Activated CD4-positive, alpha-beta memory T cell treated with anti-CD3 and anti-CD28 coated beads for 36 hours (primary cell): ENCODE measurements at regions of chr13 and their contacts with region 1.

Region 1: GRCh38 chr13:102845630-102846260 is at the start of gene ERCC5:
- DNase-seq: peak; percentile 97
- H3K4me3 Mint-ChIP-seq: peak within 1 kb of the TSS; percentile 92
- H3K27ac Mint-ChIP-seq: peak within 1 kb of the TSS; percentile 95
- H3K4me1 Mint-ChIP-seq: peaks cover 35% of the 10 kb centered on the region
- H3K27me3 Mint-ChIP-seq: peaks cover 1% of the 10 kb centered on the region
- total RNA-seq, gene ERCC5: 53.6 to 63.5 TPM

Region 2: DNA sequence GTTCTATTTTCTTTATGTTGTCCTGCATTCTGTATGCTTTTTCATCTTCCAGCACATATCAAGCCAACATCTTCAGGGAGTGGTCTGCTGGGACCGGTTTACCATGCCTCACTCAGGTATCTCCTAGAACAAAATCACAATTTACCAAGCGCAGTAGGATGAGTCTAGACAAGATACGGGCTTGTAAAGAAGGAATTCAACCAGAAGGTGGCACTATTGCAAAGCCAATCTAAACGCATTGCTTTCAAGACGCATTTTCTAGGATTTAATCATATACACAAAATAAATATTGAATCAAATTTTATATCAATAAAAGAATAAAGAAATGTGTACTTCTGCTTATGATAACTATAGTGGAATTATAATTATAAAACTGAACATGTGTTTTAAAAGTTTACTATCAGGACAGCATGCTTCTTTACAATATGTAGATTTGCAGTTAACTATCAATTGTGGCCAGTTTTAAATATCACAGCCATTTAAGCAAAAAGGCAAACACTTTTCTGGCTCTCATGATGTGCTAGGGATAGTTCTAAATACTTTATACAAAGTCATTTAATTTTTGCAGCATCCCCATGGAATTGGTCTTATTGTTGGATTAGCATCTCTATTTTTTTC is 265.1 kb before region 1 on chr13:
- CTCF ChIA-PET with region 1: interaction called, 10 read pairs
- POLR2A ChIA-PET with region 1: interaction called, 3 read pairs
- intact Hi-C with region 1: loop called (anchors 1 kb)
- DNase-seq: no peak
- H3K4me3 Mint-ChIP-seq: no peak overlapping the region
- H3K27ac Mint-ChIP-seq: no peak overlapping the region
- H3K4me1 Mint-ChIP-seq: peaks cover 4% of the 10 kb centered on the region
- H3K27me3 Mint-ChIP-seq: peaks cover 1% of the 10 kb centered on the region

Region 3: DNA sequence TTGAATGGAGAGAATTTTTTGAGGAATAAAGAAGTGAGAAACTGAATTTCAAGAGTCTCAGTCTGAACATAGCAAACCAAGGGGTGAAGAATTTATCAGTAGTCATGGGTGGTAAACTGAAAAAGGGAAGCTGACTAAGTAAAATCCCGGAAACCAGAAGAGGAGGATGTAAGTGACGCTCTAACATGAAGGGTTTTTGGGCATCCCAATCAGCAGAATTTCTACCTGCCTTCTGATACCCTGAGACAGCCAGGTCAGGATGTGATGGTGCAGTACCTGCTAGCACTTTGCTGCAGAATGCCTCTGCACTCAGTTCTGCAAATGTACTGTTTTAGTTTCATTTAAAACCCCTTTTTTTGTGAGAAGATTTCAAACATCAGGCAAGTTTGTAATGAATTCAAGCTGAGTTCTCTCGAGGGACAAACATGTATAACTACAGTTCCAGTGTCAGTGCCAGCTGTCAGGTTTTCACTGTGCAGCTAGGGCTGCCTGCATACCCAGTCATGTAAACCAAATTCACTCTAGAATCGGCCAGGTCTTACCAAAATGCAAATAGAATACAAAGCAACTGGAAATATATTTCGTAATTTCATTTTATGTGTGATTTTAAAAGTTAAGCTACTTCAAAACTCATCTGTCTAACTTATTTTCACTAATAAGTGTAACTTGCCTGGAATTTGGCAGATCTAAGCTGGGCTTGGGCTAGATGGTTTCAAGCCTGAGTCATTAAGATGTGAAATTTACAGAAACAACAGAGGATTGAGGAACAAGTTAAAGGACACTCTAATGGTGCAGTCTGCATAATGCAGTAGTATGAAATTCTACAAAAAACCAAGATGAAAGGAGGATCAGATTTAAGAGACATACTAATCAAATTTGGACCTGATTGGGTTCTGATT is 164.7 kb before region 1 on chr13:
- CTCF ChIA-PET with region 1: no interaction called
- POLR2A ChIA-PET with region 1: no interaction called
- intact Hi-C with region 1: loop called (anchors 5 kb)
- DNase-seq: no peak
- H3K4me3 Mint-ChIP-seq: no peak overlapping the region
- H3K27ac Mint-ChIP-seq: peak overlapping the region; percentile 69
- H3K4me1 Mint-ChIP-seq: peaks cover 24% of the 10 kb centered on the region
- H3K27me3 Mint-ChIP-seq: no peaks in the 10 kb centered on the region

Region 4: GRCh38 chr13:102773441-102774215 is 72.1 kb before region 1 on chr13 and contains the start of gene TEX30:
- CTCF ChIA-PET with region 1: interaction called, 6 read pairs
- POLR2A ChIA-PET with region 1: interaction called, 25 read pairs
- intact Hi-C with region 1: loop called (anchors 1 kb)
- DNase-seq: peak; percentile 89
- H3K4me3 Mint-ChIP-seq: peak within 1 kb of the TSS; percentile 85
- H3K27ac Mint-ChIP-seq: peak within 1 kb of the TSS; percentile 94
- H3K4me1 Mint-ChIP-seq: peaks cover 39% of the 10 kb centered on the region
- H3K27me3 Mint-ChIP-seq: no peaks in the 10 kb centered on the region
- total RNA-seq, gene TEX30: 42.6 to 43.2 TPM

Region 5: DNA sequence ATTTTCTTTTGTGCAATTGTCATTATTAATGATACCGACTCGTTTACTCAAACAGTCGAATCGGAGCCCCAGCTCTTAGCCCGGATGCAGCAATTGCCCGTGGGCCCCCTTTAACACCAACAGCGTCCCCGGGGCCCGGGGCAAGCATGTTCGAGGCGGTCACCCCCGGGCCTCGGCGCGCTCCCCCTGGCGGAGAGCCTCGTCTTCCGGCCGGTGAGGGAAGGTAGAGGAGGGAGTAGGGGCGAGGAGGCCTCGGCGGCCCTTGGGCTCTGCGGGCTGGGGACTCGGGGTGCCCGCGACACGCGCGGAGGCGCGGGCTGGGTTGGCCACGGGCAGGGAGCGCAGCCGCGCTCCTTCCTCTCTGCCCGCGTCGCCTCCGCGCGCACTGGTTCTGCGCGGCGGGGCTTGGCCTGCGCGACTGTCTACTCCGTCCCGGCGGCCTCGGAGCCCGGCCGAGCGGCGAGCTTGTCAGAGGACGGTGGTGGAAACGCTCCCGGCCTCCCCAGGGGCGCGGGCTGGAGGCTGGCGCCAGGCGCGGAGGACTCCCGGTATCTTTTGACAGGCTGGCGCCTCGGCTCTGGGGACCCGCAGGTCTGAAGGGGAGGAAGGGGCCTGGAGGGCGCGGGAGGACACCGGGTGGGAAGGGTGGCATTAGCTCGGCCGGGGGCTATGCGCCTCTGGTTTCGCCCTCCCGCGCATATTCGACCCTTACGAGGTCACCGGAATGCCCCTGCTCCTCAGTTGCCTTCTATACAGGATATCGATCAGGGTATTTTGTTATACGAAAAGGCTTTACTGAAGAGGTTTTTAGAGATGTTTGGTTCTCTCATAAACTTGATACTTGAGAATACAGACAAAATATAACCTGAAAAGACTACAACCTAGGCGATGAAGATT is 45.4 kb before region 1 on chr13:
- CTCF ChIA-PET with region 1: interaction called, 3 read pairs
- POLR2A ChIA-PET with region 1: interaction called, 10 read pairs
- intact Hi-C with region 1: loop called (anchors 1 kb)
- DNase-seq: peak; percentile 88
- H3K4me3 Mint-ChIP-seq: peak overlapping the region; percentile 90
- H3K27ac Mint-ChIP-seq: peak overlapping the region; percentile 38
- H3K4me1 Mint-ChIP-seq: peaks cover 22% of the 10 kb centered on the region
- H3K27me3 Mint-ChIP-seq: peaks cover 5% of the 10 kb centered on the region

Region 6: DNA sequence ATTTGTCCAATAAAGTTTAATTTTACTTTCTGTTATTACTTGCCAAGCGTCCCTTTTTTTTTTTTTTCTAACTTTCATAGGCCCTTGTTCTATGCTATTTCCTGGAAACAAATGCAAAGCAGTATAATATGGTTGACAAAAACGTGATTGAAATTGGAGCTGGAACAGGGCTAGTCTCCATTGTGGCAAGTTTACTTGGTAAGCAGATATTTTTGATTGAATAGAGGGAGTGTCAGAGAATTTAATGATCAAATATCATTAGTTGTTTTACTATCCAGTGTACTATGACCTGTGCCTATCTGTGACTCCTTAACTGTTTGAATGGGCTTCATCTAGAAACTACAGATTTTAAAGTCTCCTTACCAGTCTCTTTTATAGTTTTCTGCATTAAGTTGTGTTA is 46.8 kb after region 1 on chr13:
- CTCF ChIA-PET with region 1: no interaction called
- POLR2A ChIA-PET with region 1: no interaction called
- intact Hi-C with region 1: no loop called
- DNase-seq: no peak
- H3K4me3 Mint-ChIP-seq: no peak overlapping the region
- H3K27ac Mint-ChIP-seq: no peak overlapping the region
- H3K4me1 Mint-ChIP-seq: no peaks in the 10 kb centered on the region
- H3K27me3 Mint-ChIP-seq: no peaks in the 10 kb centered on the region